ENCODE measurements at regions of chr1 and their contacts with region 1.

Region 1: DNA sequence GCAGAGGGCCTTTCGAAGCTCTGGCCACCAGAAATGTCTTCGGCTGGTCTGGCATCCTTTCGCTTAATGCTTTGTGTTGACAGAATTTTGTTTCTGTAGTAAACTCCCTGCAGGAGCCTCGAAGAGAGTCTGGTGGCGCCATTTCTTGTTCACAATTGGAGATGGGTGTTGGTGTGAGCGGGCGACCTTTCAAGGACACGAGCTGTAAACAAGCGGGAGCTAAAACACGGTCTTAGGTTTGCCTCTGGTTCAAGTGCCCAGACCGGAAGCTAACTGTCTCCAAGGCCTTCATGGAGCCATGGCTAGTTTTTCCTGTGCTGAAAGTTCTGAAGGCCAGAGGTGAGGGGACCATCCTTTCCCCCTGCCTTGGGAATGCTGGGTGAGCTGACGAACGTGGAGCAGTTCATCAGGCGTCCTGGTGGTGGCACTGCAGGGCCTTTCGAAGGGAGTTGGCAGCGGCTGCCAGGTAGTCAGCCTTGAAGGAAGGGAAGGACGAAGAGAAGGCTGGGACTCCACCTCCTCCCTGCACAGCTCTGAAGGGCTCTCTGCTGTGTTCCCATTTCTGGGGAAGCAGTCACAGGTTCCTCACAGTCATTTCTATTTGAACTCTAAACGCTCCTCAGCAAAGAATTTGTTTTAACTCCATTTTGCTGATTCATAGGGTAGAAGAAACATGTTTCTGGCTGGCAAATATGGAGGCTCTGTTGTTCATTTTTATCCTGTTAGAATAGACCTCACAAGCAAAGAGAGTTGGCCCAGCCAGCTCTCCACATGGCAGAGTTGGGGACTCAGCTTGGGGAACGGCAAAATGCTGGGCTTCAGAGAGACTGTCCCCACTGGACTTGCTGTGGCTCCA is 35.2 kb downstream of the URB2 start:
- DNase-seq: peak; percentile 93
- H3K4me3 ChIP-seq: no peak overlapping the region
- H3K27ac ChIP-seq: no peak overlapping the region
- H3K4me1 ChIP-seq: peaks cover 0 to 7% (median 0%) of the 10 kb centered on the region in 4 donors
- H3K27me3 ChIP-seq: no peaks in the 10 kb centered on the region
- CTCF ChIP-seq: peak; percentile 81 to 94 (median 89)
- EP300 ChIP-seq: no peak
- POLR2A ChIP-seq: no peak

Region 2: DNA sequence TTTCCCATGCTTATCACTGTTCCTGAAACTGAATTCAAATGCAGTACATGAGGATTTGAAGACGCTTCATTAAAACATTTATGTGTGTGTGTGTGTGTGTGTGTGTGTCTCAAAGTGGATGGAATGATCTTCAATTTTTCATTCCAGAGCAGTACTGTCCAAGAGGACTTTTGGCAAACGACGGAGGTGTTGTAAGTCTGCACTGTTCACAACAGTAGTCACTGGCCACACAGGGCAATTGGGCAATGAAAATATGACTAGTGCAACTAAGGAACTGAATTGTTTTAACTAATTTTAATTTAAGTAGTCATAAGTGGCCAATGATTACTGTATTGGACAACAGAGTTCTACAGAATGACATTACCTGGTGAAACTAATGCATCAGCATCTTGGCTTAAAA is 40.4 kb before region 1 on chr1:
- intact Hi-C with region 1: no loop called
- DNase-seq: no peak
- H3K4me3 ChIP-seq: no peak overlapping the region
- H3K27ac ChIP-seq: peak overlapping the region in 1 of 4 donors; percentile 3
- H3K4me1 ChIP-seq: peaks cover 0 to 56% (median 32%) of the 10 kb centered on the region in 4 donors
- H3K27me3 ChIP-seq: no peaks in the 10 kb centered on the region
- CTCF ChIP-seq: no peak
- EP300 ChIP-seq: no peak
- POLR2A ChIP-seq: no peak

Region 3: DNA sequence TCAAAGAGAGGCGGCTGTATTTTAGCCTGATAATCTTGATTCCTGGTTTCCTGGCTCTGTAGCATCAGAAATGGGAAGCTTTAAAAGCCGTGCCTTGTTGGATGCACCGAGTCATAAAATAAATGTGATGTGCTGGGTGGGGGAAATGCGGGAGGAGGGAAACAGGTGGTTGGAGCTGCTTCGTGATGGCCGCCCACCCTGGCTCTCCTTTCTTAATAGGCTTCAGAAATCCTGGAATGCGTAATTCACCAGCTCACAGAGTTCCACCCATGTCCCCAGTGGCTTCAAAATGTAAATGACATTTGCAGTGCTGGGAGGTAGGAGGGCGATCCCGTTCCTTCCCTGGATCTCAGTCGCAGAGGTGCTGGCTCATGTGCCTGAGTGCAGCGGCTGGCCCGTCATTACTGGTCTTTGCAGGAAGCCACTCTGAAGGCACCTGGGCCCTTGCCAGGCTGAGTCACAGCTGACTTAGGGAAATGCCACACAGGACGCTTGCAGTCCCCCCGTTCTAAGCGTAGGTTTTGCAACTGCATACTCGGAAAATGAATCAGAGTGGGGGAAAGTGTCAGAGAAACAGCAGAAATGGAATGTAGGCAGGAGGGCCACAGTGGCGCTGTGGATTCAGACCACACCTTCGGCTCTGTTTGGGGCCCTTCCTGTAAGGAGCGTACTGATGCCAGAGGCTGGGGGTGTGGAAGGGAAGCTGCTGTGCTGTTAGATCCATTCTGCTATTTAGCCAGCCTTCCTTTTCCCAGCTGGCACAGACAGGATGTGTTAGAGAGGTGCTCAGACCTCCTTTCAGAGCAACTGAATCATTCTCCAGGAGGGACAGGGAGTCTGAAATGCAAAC is 443.4 kb after region 1 on chr1:
- intact Hi-C with region 1: loop called (anchors 5 kb)
- DNase-seq: peak; percentile 98
- H3K4me3 ChIP-seq: peak overlapping the region in 3 of 4 donors; percentile 2 to 4 (median 2)
- H3K27ac ChIP-seq: peak overlapping the region; percentile 58 to 88 (median 68)
- H3K4me1 ChIP-seq: peaks cover 0 to 69% (median 61%) of the 10 kb centered on the region in 4 donors
- H3K27me3 ChIP-seq: no peaks in the 10 kb centered on the region
- CTCF ChIP-seq: no peak
- EP300 ChIP-seq: peak in 1 of 4 donors; percentile 82
- POLR2A ChIP-seq: no peak

Region 4: GRCh38 chr1:230215031-230215430 is 553.8 kb after region 1 on chr1:
- intact Hi-C with region 1: loop called (anchors 5 kb)
- DNase-seq: peak; percentile 87
- H3K4me3 ChIP-seq: no peak overlapping the region
- H3K27ac ChIP-seq: peak overlapping the region; percentile 12 to 38 (median 34)
- H3K4me1 ChIP-seq: peaks cover 0 to 16% (median 11%) of the 10 kb centered on the region in 4 donors
- H3K27me3 ChIP-seq: no peaks in the 10 kb centered on the region
- CTCF ChIP-seq: peak; percentile 23 to 52 (median 40)
- EP300 ChIP-seq: no peak
- POLR2A ChIP-seq: no peak

Region 5: DNA sequence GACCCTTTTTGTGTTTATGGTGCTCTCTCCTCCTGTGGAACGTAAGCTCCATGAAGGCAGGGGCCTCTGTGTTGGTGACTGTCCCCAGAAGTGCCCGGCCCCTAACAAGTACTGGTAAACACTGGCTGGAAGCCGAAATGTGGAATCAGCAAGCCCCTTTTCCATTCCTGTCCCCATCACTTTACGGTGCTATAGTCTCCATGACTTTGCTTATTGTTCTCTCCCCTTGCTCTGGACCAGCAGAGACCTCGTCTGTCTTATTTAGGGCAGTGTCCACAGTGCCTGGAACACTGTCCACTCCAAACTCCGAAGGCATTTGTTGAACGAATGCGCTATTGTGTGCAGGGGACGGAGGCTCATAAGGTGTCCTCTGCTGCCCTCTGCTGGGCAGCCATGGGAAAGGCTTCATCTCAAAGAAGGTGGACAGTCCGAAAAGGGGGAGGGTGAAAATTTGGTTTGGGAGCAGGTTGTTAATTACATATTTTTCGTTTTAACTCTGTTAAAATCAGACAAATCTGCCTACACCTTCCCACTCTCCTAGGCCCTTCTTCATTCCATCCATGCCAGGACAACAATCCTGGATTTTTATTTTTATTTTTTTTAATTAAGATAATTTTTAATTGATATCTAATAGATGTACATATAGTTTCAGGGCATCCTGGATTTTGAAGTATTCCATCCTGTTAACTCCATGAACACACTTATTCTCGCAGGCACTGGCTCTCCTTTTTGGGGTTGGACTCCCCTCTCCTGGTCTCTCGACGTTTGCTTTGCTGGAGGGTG is 649.3 kb after region 1 on chr1:
- intact Hi-C with region 1: loop called (anchors 1 kb)
- DNase-seq: peak; percentile 89
- H3K4me3 ChIP-seq: no peak overlapping the region
- H3K27ac ChIP-seq: no peak overlapping the region
- H3K4me1 ChIP-seq: peaks cover 0 to 2% (median 0%) of the 10 kb centered on the region in 4 donors
- H3K27me3 ChIP-seq: no peaks in the 10 kb centered on the region
- CTCF ChIP-seq: peak; percentile 74 to 93 (median 86)
- EP300 ChIP-seq: no peak
- POLR2A ChIP-seq: no peak